RWPE1 (cell line): ENCODE measurements at regions of chr1 and their contacts with region 1.

Region 1: DNA sequence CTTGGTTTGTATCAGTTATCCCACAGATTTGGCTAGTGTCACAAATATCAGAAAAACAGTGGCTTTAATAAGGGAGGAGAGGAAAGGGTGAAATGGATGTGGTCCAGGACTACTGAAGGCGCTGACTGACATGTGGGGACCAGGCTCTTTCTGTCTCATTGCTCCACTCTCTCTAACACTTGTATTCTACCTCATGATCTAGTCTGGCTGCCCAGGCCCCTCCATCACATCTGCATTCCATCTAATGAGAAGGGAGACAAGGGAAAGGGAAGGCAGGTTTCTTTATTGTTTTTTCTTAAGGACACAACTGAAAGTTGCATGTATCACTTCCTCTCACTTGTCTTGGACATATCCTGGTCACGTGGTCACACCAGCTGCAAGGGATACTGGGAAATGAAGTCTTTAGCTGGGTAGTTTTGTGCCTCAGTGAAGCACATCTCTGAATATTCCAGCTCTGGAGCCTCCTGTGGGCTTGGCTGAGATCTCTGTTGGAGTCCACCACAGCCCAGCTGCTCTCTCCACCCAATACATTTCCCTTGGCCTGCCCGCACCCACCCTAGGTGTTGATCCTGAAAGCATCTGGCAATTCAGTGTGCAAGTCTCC is 42.0 kb upstream of the PADI2 start:
- DNase-seq: no peak
- H3K27ac ChIP-seq: no peak overlapping the region; the same call in 1 of the 2 replicates
- CTCF ChIP-seq: no peak

Region 2: GRCh38 chr1:17053685-17054410 is 107.4 kb before region 1 on chr1 and contains the start of gene SDHB:
- CTCF ChIA-PET with region 1: interaction called, 10 read pairs
- POLR2A ChIA-PET with region 1: no interaction called
- DNase-seq: peak; percentile 99
- H3K27ac ChIP-seq: peak within 1 kb of the TSS; percentile 80
- CTCF ChIP-seq: no peak

Region 3: DNA sequence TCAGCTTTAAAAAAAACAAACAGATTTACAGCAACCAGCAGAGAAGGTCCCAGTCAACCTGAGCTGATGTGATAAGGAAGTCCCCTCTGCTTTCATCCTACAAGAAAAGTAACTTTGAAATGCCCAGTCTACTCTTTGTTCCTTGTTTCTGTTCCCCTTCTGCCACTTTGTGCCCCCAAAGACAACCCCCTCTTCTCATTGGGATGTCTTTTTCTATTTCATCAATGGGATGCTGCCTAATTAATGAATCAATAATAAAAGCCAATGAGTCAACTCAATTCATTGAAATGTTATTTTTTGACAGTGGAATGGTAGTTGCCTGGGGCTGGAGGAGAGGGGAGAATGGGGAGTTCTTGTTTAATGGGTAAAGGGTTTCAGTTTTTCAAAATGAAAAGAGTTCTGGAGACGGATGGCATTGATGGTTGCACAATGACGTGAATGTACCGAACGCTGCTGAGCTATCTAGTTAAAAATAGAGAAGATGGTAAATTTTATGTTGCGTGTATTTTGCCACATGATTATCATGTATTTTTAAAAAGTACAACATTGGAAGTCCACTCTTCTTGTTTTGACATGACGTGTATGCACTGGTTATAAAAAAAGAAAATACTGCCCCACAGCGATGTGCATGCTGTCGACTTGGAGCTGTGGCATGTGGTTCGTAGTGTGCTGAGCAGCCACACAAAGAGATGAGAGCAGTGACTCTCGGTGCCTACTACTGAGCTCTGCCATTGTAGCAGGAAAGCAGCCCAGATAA is 19.6 kb before region 1 on chr1:
- CTCF ChIA-PET with region 1: no interaction called
- POLR2A ChIA-PET with region 1: interaction called, 11 read pairs
- DNase-seq: no peak
- H3K27ac ChIP-seq: no peak overlapping the region
- CTCF ChIP-seq: no peak